ENCODE measurements at regions of chr18 and their contacts with region 1.

Region 1: DNA sequence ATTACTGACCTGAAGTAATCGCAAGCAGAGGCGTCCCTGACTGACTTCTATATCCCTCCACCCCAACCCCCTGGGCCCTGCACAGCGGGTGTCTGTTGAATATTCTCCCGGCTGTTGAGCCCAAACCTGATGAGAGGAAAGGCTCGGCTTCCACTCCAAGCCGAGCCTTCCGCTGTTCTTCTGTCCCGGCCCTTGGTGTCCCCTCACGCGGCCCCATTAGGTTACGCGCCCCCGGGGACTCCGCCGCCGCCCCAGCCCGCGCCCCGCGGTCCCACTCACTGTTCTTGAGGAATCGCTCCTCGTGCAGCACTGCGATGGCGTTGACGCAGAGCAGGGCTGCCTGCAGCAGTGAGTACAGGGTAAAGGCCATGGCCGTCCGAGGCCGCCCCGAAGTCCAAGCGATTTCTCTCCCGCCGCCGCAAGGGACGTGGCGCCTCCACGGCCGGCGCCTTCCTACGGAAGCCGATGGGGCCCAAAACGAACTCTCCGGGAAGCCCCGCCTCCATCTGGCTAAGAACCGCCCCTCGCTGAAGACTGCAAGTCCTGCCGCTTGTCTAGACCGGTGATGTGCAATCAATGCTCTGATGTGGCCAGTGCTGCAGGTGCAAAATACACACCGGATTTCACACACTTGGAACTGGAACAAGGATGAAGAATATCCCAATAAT is at the start of gene IER3IP1:
- DNase-seq: peak; percentile 89
- H3K4me3 Mint-ChIP-seq: no peak within 1 kb of the TSS
- H3K27ac Mint-ChIP-seq: no peak within 1 kb of the TSS
- H3K4me1 Mint-ChIP-seq: no peaks in the 10 kb centered on the region
- H3K27me3 Mint-ChIP-seq: no peaks in the 10 kb centered on the region
- CTCF ChIP-seq: no peak
- total RNA-seq, gene IER3IP1: 14.1 and 14.5 TPM in 2 replicates

Region 2: DNA sequence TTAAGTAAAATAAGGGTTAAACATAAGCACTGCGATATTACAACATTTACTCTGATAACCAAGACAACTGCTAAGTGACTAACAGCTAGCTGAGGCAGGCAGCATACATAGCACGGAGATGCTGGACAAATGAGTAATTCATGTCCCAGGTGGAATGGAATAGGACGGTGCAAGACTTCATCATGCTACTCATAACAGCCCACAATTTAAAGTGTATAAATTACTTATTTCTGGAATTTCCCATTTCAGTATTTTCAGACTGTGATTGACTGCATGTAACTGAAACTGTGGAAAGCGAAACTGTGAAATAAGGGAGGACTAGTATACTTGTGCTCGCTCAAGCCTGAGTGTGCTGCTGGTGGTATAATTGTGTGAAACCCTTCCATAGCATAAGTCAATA is 12.8 kb before region 1 on chr18:
- CTCF ChIA-PET with region 1: no interaction called
- POLR2A ChIA-PET with region 1: interaction called, 22 read pairs
- intact Hi-C with region 1: no loop called
- DNase-seq: peak; percentile 72
- H3K4me3 Mint-ChIP-seq: no peak overlapping the region
- H3K27ac Mint-ChIP-seq: no peak overlapping the region
- H3K4me1 Mint-ChIP-seq: peaks cover 4% of the 10 kb centered on the region
- H3K27me3 Mint-ChIP-seq: no peaks in the 10 kb centered on the region
- CTCF ChIP-seq: no peak

Measured in MCF 10A (cell line).